ENCODE measurements at regions of chr9 and their contacts with region 1.

Region 1: GRCh38 chr9:128117613-128118471 is 9.7 kb downstream of the PTGES2 start:
- DNase-seq: peak; percentile 91 to 100
- H3K4me3 ChIP-seq: peak overlapping the region in 2 of 4 experiments; percentile 14 to 40; a peak in 5 of 8 replicates
- H3K27ac ChIP-seq: no peak overlapping the region
- H3K4me1 ChIP-seq: peaks cover 0 to 4% (median under 1%) of the 10 kb centered on the region in 4 experiments; a peak in 3 of 7 replicates
- H3K27me3 ChIP-seq: no peaks in the 10 kb centered on the region
- CTCF ChIP-seq: peak in 2 of 3 experiments; percentile 100; a peak in 3 of 4 replicates
- EP300 ChIP-seq: no peak
- POLR2A ChIP-seq: peak in 1 of 2 experiments; percentile 21; a peak in 1 of 3 replicates
- RAD21 ChIP-seq: peak; percentile 95

Region 2: DNA sequence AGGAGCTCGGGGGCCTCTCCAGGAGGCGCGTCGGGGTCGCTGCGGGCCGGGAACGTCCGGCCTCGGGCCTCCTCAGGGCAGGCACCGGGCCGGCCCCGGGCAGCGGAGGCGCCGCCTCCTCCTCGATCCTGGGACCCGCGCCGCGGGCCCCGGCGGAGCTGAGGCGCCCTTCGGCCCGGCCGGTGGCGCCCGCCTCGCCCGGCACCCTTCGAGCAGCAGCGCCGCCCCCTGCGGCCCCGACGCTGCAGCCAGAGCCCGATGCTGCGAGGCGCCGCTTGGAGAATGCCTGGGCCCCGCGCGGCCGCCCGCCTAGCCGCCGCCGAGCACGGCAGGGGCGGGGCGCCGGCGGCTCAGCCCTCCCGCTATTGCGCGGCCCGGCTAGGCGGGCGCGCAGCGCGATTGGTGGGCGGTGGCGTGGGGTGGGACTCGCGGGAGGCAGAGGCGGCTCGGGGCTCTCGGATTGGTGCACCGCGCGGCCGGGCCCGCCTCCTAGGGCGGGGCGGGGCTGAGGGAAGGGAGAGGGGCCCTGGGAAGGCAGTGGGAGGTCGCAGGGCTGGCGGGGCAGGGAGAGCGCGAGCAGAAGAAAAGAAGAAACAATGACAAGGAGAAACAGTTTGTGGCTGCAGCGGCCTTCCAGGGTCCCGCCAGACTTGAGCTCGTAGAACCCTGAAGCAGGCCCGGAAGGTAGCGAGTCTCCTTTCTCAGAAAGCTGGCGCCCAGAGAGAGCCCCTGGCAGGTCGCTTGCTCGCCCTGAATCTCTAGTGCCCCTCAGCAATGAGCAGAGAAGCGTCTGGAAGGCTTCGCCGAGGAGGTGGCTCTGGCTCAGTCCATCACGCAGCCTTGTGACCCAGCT is 136.9 kb before region 1 on chr9 and contains the start of gene EEIG1:
- CTCF ChIA-PET with region 1: interaction called, 14 read pairs
- POLR2A ChIA-PET with region 1: no interaction called
- DNase-seq: peak; percentile 80 to 97
- H3K4me3 ChIP-seq: peak within 1 kb of the TSS; percentile 88 to 99 (median 93)
- H3K27ac ChIP-seq: peak within 1 kb of the TSS; percentile 79
- H3K4me1 ChIP-seq: peaks cover 4 to 34% (median 24%) of the 10 kb centered on the region in 4 experiments
- H3K27me3 ChIP-seq: no peaks in the 10 kb centered on the region
- CTCF ChIP-seq: no peak; a peak in 1 of 4 replicates
- EP300 ChIP-seq: no peak
- POLR2A ChIP-seq: no peak; a peak in 2 of 3 replicates
- RAD21 ChIP-seq: no peak
- total RNA-seq, gene EEIG1: 50.8 and 51.3 TPM in 2 replicates

Region 3: DNA sequence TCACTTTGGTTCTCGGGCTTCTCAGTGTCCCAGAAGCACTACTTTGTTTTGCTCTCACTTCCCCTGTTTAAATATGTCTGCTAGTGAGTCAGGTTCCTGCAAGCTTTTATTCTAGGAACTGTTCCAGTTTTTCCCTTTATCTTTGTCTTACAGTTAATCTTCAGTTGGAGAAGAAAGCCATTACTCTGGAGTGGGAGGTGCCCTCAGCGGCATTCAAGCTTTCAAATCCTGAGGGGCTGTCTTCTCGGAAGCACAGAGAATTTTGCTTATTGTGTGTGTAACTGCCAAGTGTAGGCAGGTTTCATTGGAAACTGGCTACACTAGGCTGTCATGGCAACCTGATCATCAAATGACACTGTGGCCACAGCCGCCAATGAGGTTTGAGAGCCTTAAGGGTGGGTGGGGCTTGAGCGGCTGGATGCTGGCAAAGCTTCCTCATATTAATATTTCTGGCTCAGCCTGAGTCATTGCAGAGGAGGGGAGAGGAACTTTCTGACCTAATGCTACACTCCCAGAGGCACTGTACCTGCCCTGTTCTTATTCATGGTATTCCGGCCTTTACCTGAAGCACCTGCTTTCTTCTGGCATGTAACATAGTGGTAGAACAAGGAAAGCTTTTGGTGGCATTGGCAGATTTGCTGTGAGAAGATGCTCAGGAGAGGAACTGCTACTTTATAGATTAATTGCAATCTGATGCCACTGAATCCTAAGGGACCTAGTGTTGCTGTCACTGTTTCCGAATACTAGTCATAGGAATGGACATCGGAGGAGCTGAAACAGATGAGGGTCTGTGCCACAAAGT is 23.5 kb before region 1 on chr9:
- CTCF ChIA-PET with region 1: interaction called, 114 read pairs
- POLR2A ChIA-PET with region 1: interaction called, 119 read pairs
- DNase-seq: no peak
- H3K4me3 ChIP-seq: no peak overlapping the region
- H3K27ac ChIP-seq: peak overlapping the region; percentile 46; the same call in 1 of the 2 replicates
- H3K4me1 ChIP-seq: peaks cover 0 to 16% (median 14%) of the 10 kb centered on the region in 4 experiments; a peak in 6 of 7 replicates
- H3K27me3 ChIP-seq: no peaks in the 10 kb centered on the region
- CTCF ChIP-seq: no peak
- EP300 ChIP-seq: no peak
- POLR2A ChIP-seq: no peak
- RAD21 ChIP-seq: no peak

Region 4: GRCh38 chr9:128127990-128128835 is 10.4 kb after region 1 on chr9:
- CTCF ChIA-PET with region 1: interaction called, 18 read pairs
- POLR2A ChIA-PET with region 1: interaction called, 14 read pairs
- DNase-seq: peak in 1 of 2 experiments; percentile 92
- H3K4me3 ChIP-seq: peak overlapping the region; percentile 86 to 96 (median 89)
- H3K27ac ChIP-seq: peak overlapping the region; percentile 95
- H3K4me1 ChIP-seq: peaks cover 0 to 6% (median 3%) of the 10 kb centered on the region in 4 experiments; a peak in 4 of 7 replicates
- H3K27me3 ChIP-seq: peaks cover 0 to 8% (median 7%) of the 10 kb centered on the region in 4 experiments; a peak in 5 of 7 replicates
- CTCF ChIP-seq: no peak
- EP300 ChIP-seq: no peak; a peak in 1 of 3 replicates
- POLR2A ChIP-seq: peak in 1 of 2 experiments; percentile 38; a peak in 1 of 3 replicates
- RAD21 ChIP-seq: no peak

Region 5: DNA sequence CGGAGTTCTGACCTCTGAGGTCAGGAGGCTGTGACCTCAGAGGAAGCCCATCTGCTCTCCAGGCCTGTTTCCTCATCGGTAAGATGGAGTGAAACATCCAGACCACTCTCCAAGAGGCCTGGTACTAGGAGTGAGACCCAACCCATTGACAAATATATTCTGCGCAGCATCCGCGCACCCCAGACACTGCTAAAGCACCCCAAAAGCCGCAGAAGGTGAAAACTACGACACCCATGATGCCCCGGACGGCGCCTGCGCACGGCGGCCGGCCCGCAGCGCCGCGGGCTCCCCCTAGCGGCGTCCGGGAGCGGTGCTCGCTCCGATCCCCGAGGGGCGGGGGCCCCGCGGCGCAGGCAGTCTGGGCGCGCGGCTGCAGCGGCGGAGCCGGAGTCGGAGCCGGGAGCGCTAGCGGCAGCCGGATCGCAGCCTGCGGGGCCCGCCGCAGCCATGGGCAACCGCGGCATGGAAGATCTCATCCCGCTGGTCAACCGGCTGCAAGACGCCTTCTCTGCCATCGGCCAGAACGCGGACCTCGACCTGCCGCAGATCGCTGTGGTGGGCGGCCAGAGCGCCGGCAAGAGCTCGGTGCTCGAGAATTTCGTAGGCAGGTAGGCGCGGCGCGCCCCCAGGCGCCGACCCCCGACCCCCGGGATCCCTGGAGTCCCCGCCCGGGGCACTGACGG is 85.3 kb after region 1 on chr9 and contains the start of gene DNM1:
- CTCF ChIA-PET with region 1: no interaction called
- POLR2A ChIA-PET with region 1: no interaction called
- DNase-seq: peak in 1 of 2 experiments; percentile 82
- H3K4me3 ChIP-seq: peak within 1 kb of the TSS; percentile 55 to 93 (median 74)
- H3K27ac ChIP-seq: no peak within 1 kb of the TSS; the same call in 1 of the 2 replicates
- H3K4me1 ChIP-seq: peaks cover 3 to 11% (median 9%) of the 10 kb centered on the region in 4 experiments; a peak in 6 of 7 replicates
- H3K27me3 ChIP-seq: no peaks in the 10 kb centered on the region
- CTCF ChIP-seq: peak; percentile 82 to 89 (median 89)
- EP300 ChIP-seq: no peak
- POLR2A ChIP-seq: peak in 1 of 2 experiments; percentile 61; a peak in 2 of 3 replicates
- RAD21 ChIP-seq: peak in 1 of 2 experiments; percentile 28; a peak in 1 of 4 replicates
- total RNA-seq, gene DNM1: 43.7 and 62.7 TPM in 2 replicates

Region 6: DNA sequence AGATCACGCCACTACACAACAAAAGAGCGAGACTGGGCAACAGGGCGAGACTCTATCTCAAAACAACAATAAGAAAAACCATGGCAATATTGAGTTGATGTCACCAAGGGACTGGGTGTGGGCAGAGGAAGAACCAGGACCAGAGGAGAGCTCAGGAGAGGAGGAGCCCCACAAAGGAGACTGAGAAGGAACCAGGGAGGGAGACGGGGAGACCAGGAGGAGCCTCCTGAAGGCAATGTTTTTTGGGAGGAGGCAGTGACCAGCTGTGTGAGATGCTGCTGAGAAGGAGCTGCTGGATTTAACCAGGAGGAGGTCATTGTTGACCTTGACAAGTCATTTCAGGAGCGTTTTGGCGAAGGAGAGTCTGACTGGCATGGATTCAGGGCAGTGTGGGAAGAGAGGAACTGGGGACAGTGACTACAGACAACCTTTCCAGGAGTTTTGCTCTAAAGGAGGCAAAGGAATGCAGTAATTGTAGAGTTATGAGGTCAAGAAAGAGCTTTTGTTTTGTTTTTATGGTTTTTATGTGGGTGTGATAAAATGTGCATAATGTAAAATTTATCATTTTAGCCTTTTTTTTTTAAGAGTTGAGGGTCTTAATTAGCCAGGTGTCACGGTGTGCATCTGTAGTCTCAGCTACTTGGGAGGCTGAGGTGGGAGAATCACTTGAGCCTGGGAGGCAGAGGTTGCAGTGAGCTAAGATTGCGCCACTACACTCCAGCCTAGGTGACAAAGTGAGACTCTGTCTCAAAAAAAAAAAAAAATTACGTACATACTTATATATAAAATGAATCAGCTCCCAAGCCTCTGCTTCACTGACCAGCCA is 186.5 kb after region 1 on chr9:
- CTCF ChIA-PET with region 1: no interaction called
- POLR2A ChIA-PET with region 1: no interaction called
- DNase-seq: no peak
- H3K4me3 ChIP-seq: no peak overlapping the region
- H3K27ac ChIP-seq: no peak overlapping the region
- H3K4me1 ChIP-seq: no peaks in the 10 kb centered on the region
- H3K27me3 ChIP-seq: no peaks in the 10 kb centered on the region
- CTCF ChIP-seq: no peak
- EP300 ChIP-seq: no peak
- POLR2A ChIP-seq: no peak
- RAD21 ChIP-seq: no peak

Region 7: DNA sequence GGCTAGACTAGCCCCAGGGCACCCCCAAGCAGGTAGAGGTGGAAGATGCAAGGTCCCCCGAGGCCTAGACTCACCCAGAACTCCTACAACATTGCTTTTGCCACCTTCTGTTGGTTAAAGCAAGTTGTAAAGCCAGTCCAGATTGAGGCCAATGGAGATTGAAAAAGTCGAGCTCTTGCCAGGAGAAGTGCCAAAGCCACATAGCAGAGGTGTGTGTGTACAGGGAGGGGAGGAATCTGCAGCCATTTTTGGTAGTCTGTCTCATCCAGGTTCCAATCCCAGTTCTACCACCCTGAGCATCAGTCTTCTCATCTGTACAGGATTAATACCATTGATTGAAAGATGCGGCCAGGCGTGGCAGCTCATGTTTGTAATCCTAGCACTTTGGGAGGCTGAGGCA is 241.0 kb after region 1 on chr9:
- CTCF ChIA-PET with region 1: no interaction called
- POLR2A ChIA-PET with region 1: no interaction called
- DNase-seq: no peak
- H3K4me3 ChIP-seq: no peak overlapping the region
- H3K27ac ChIP-seq: no peak overlapping the region
- H3K4me1 ChIP-seq: peaks cover 0 to 8% (median 6%) of the 10 kb centered on the region in 4 experiments; a peak in 6 of 7 replicates
- H3K27me3 ChIP-seq: peaks cover 9 to 27% (median 19%) of the 10 kb centered on the region in 4 experiments
- CTCF ChIP-seq: no peak
- EP300 ChIP-seq: no peak
- POLR2A ChIP-seq: no peak
- RAD21 ChIP-seq: no peak